ENCODE measurements at regions of chr11 and their contacts with region 1.

Region 1: DNA sequence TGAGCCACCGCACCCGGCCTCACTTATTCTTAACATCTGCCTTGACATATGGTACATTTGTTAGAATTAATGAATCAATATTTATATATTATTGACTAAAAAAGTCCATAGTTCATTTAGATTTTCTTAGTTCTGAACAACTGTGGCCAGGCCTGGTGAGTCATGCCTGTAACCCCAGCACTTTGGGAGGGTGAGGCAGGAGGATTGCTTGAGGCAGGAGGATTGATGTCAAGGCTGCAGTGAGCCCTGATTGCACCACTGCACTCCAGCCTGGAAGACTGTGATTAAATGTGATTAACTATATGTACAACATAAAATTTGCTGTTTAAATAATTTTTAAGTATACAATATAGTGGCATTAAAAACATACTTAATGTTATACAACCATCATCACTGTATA is 5.6 kb downstream of the UVRAG start:
- DNase-seq: no peak
- ATAC-seq: no peak
- H3K4me3 ChIP-seq: no peak overlapping the region
- H3K4me3 Mint-ChIP-seq: no peak overlapping the region
- H3K27ac ChIP-seq: no peak overlapping the region
- H3K27ac Mint-ChIP-seq: peak overlapping the region in 1 of 2 donors; percentile 76
- H3K4me1 ChIP-seq: peaks cover 26% of the 10 kb centered on the region
- H3K4me1 Mint-ChIP-seq: peaks cover 22 to 39% of the 10 kb centered on the region in 2 donors
- H3K27me3 ChIP-seq: no peaks in the 10 kb centered on the region
- H3K27me3 Mint-ChIP-seq: no peaks in the 10 kb centered on the region
- CTCF ChIP-seq: no peak

Region 2: DNA sequence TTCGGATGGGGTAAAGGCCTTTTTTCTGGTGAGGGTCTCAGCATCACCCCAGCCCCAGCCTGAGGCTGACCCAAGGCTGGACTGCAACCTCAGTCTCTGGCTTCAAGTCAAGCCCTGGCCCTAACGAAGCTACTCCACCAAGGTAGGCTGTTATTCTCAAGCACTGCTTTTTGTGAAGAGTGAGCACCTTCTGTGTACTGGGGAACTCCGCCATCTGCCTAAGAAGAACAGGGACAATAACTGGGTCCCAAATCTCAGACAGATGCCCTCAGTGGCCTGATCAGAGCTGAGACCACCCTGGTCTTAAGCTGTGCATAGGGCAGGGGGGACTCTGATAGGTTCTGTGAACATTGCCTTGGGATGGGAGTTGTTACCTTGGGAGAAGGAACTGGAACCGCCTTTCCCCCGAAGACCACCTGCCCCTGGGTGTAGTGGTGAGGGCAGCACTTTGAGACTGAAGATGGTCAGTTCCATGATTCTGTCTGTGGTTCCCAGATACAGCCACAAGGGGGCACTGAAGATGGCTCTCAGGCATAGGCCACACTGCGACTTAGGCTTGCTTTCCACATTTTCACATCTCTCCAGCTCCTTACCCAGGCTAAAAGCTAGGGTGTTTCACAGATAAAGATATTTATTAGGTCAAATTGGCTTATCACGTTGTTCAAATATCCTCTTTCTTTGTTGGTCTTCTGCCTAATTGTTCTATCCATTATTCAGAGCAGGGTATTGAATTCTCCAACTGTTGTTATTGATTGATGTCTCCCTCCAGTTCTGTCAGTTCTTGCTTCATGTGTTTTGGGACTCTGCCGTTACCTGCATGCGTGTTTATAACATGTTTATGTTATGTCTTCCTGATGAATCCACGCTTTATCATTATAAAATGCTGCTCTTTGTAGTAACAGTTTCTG is 17.5 kb before region 1 on chr11:
- intact Hi-C with region 1: no loop called
- DNase-seq: peak; percentile 71 to 85
- ATAC-seq: peak; percentile 87 to 99 (median 98)
- H3K4me3 ChIP-seq: no peak overlapping the region
- H3K4me3 Mint-ChIP-seq: no peak overlapping the region
- H3K27ac ChIP-seq: no peak overlapping the region
- H3K27ac Mint-ChIP-seq: no peak overlapping the region
- H3K4me1 ChIP-seq: peaks cover 20% of the 10 kb centered on the region
- H3K4me1 Mint-ChIP-seq: no peaks in the 10 kb centered on the region
- H3K27me3 ChIP-seq: no peaks in the 10 kb centered on the region
- H3K27me3 Mint-ChIP-seq: no peaks in the 10 kb centered on the region
- CTCF ChIP-seq: peak; percentile 85

Region 3: GRCh38 chr11:75845324-75845723 is 24.7 kb after region 1 on chr11:
- intact Hi-C with region 1: no loop called
- DNase-seq: no peak
- ATAC-seq: no peak
- H3K4me3 ChIP-seq: no peak overlapping the region
- H3K4me3 Mint-ChIP-seq: no peak overlapping the region
- H3K27ac ChIP-seq: no peak overlapping the region
- H3K27ac Mint-ChIP-seq: no peak overlapping the region
- H3K4me1 ChIP-seq: peaks cover 5% of the 10 kb centered on the region
- H3K4me1 Mint-ChIP-seq: peaks cover 33 to 34% of the 10 kb centered on the region in 2 donors
- H3K27me3 ChIP-seq: no peaks in the 10 kb centered on the region
- H3K27me3 Mint-ChIP-seq: no peaks in the 10 kb centered on the region
- CTCF ChIP-seq: no peak

Region 4: GRCh38 chr11:75858611-75859010 is 38.0 kb after region 1 on chr11:
- intact Hi-C with region 1: loop called (anchors 5 kb)
- DNase-seq: no peak
- ATAC-seq: peak; percentile 66 to 78 (median 78)
- H3K4me3 ChIP-seq: no peak overlapping the region
- H3K4me3 Mint-ChIP-seq: peak overlapping the region; percentile 72
- H3K27ac ChIP-seq: peak overlapping the region; percentile 29
- H3K27ac Mint-ChIP-seq: peak overlapping the region; percentile 78 to 81
- H3K4me1 ChIP-seq: peaks cover 9% of the 10 kb centered on the region
- H3K4me1 Mint-ChIP-seq: peaks cover 24 to 50% of the 10 kb centered on the region in 2 donors
- H3K27me3 ChIP-seq: no peaks in the 10 kb centered on the region
- H3K27me3 Mint-ChIP-seq: no peaks in the 10 kb centered on the region
- CTCF ChIP-seq: no peak

Measured in natural killer cell (primary cell).